PC-9 (cell line): ENCODE measurements at regions of chr14 and their contacts with region 1.

Region 1: GRCh38 chr14:71320107-71320733 is 413.0 kb downstream of the PCNX1 start:
- DNase-seq: peak; percentile 94 to 97
- H3K4me3 ChIP-seq: peak within 1 kb of the TSS; percentile 97
- H3K27ac ChIP-seq: peak within 1 kb of the TSS; percentile 99
- H3K4me1 ChIP-seq: peaks cover 40% of the 10 kb centered on the region
- H3K27me3 ChIP-seq: no peaks in the 10 kb centered on the region
- CTCF ChIP-seq: no peak

Region 2: GRCh38 chr14:71138448-71139293 is 181.5 kb before region 1 on chr14:
- CTCF ChIA-PET with region 1: interaction called, 4 read pairs
- POLR2A ChIA-PET with region 1: no interaction called
- intact Hi-C with region 1: loop called (anchors 1 kb)
- DNase-seq: peak; percentile 44 to 57
- H3K4me3 ChIP-seq: no peak overlapping the region
- H3K27ac ChIP-seq: no peak overlapping the region
- H3K4me1 ChIP-seq: peaks cover 33% of the 10 kb centered on the region
- H3K27me3 ChIP-seq: no peaks in the 10 kb centered on the region
- CTCF ChIP-seq: peak; percentile 99

Region 3: GRCh38 chr14:71290960-71291466 is 29.2 kb before region 1 on chr14:
- CTCF ChIA-PET with region 1: no interaction called
- POLR2A ChIA-PET with region 1: interaction called, 6 read pairs
- intact Hi-C with region 1: loop called (anchors 1 kb)
- DNase-seq: peak; percentile 63 to 97
- H3K4me3 ChIP-seq: 0 out of 2 replicates have a peak overlapping the region, but pooled peaks have one; percentile 9
- H3K27ac ChIP-seq: peak overlapping the region; percentile 95
- H3K4me1 ChIP-seq: peaks cover 69% of the 10 kb centered on the region
- H3K27me3 ChIP-seq: no peaks in the 10 kb centered on the region
- CTCF ChIP-seq: no peak

Region 4: GRCh38 chr14:71371711-71372396 is 51.6 kb after region 1 on chr14:
- CTCF ChIA-PET with region 1: no interaction called
- POLR2A ChIA-PET with region 1: no interaction called
- intact Hi-C with region 1: loop called (anchors 2 kb)
- DNase-seq: peak in 1 of 2 experiments; percentile 60
- H3K4me3 ChIP-seq: peak overlapping the region; percentile 18; the same call in 1 of the 2 replicates
- H3K27ac ChIP-seq: peak overlapping the region; percentile 87
- H3K4me1 ChIP-seq: peaks cover 33% of the 10 kb centered on the region
- H3K27me3 ChIP-seq: no peaks in the 10 kb centered on the region
- CTCF ChIP-seq: no peak

Region 5: GRCh38 chr14:71529848-71530247 is 209.6 kb after region 1 on chr14:
- CTCF ChIA-PET with region 1: no interaction called
- POLR2A ChIA-PET with region 1: no interaction called
- intact Hi-C with region 1: loop called (anchors 10 kb)
- DNase-seq: no peak
- H3K4me3 ChIP-seq: no peak overlapping the region
- H3K27ac ChIP-seq: no peak overlapping the region
- H3K4me1 ChIP-seq: no peaks in the 10 kb centered on the region
- H3K27me3 ChIP-seq: no peaks in the 10 kb centered on the region
- CTCF ChIP-seq: no peak

Region 6: GRCh38 chr14:71647083-71647784 is 327.0 kb after region 1 on chr14:
- CTCF ChIA-PET with region 1: no interaction called
- POLR2A ChIA-PET with region 1: no interaction called
- intact Hi-C with region 1: loop called (anchors 5 kb)
- DNase-seq: peak; percentile 34 to 91
- H3K4me3 ChIP-seq: no peak overlapping the region
- H3K27ac ChIP-seq: peak overlapping the region; percentile 40
- H3K4me1 ChIP-seq: peaks cover 27% of the 10 kb centered on the region
- H3K27me3 ChIP-seq: no peaks in the 10 kb centered on the region
- CTCF ChIP-seq: no peak

Region 7: DNA sequence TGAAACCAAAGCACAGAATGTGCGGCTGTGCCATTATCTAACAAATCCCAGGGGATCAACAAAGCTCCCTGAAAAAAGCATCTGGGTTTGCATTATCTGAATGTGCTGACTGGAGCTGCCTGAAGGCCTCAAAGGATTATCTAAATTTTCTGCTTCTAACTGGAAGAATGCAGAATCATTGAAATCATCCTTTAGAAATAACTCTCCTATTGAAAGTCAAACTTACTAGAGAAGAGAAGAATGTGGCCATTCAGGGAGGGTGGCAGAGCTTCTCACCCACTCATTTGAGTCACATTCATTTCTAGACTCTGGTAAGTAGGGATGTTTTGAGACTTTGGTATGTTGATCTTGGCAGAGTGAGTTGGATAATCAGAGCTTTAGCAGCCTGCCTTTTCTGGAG is 391.4 kb after region 1 on chr14:
- CTCF ChIA-PET with region 1: no interaction called
- POLR2A ChIA-PET with region 1: no interaction called
- intact Hi-C with region 1: loop called (anchors 10 kb)
- DNase-seq: peak in 1 of 2 experiments; percentile 77
- H3K4me3 ChIP-seq: no peak overlapping the region
- H3K27ac ChIP-seq: 0 out of 2 replicates have a peak overlapping the region, but pooled peaks have one; percentile 4
- H3K4me1 ChIP-seq: peaks cover 5% of the 10 kb centered on the region; the same call in 1 of the 2 replicates
- H3K27me3 ChIP-seq: no peaks in the 10 kb centered on the region
- CTCF ChIP-seq: no peak